CD8-positive, alpha-beta memory T cell (primary cell): ENCODE measurements at regions of chr11 and their contacts with region 1.

Region 1: GRCh38 chr11:61041755-61042518 is 60.4 kb upstream of the CD5 start:
- DNase-seq: peak; percentile 54 to 92 (median 83)
- H3K4me3 ChIP-seq: peak overlapping the region; percentile 20
- H3K4me3 Mint-ChIP-seq: peak overlapping the region; percentile 74 to 90 (median 83)
- H3K27ac ChIP-seq: peak overlapping the region; percentile 83
- H3K27ac Mint-ChIP-seq: peak overlapping the region; percentile 95 to 100 (median 97)
- H3K4me1 ChIP-seq: peaks cover 50% of the 10 kb centered on the region
- H3K4me1 Mint-ChIP-seq: peaks cover 25 to 49% (median 37%) of the 10 kb centered on the region in 3 donors
- H3K27me3 ChIP-seq: no peaks in the 10 kb centered on the region
- H3K27me3 Mint-ChIP-seq: no peaks in the 10 kb centered on the region

Region 2: GRCh38 chr11:60985991-60986915 is 55.7 kb before region 1 on chr11:
- CTCF ChIA-PET with region 1: interaction called, 8 read pairs
- POLR2A ChIA-PET with region 1: interaction called, 10 read pairs
- DNase-seq: peak; percentile 81 to 97 (median 95)
- H3K4me3 ChIP-seq: peak overlapping the region; percentile 23
- H3K4me3 Mint-ChIP-seq: peak overlapping the region; percentile 56 to 82 (median 71)
- H3K27ac ChIP-seq: peak overlapping the region; percentile 55
- H3K27ac Mint-ChIP-seq: peak overlapping the region; percentile 84 to 99 (median 96)
- H3K4me1 ChIP-seq: peaks cover 88% of the 10 kb centered on the region
- H3K4me1 Mint-ChIP-seq: peaks cover 79 to 97% (median 92%) of the 10 kb centered on the region in 3 donors
- H3K27me3 ChIP-seq: no peaks in the 10 kb centered on the region
- H3K27me3 Mint-ChIP-seq: no peaks in the 10 kb centered on the region

Region 3: DNA sequence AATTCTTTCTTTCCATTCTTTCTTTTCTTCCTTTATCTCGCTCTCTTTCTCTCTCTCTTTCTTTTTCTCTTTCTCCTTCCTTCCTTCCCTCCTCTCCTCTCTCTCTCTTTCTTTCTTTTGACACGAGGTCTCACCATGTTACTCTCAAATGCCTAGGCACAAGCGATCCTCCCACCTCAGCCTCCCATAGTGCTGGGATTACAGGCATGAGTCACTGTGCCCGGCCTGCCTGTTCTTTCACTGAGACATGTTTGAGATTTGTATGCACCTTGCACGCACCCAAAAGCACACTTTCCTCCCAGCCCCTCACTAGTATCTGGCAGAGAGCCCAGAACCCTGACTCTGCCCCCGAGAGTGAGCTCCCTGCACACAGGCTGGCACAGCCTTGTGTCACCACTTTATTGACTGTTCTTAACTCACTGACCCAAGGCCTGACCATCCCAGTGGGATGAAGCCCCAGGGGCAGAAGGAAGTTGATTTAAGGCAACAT is 13.6 kb before region 1 on chr11:
- CTCF ChIA-PET with region 1: interaction called, 27 read pairs
- POLR2A ChIA-PET with region 1: interaction called, 38 read pairs
- DNase-seq: peak in 3 of 5 donors; percentile 23 to 70 (median 56)
- H3K4me3 ChIP-seq: peak overlapping the region; percentile 40
- H3K4me3 Mint-ChIP-seq: peak overlapping the region; percentile 62 to 84 (median 77)
- H3K27ac ChIP-seq: no peak overlapping the region
- H3K27ac Mint-ChIP-seq: peak overlapping the region in 7 of 8 donors; percentile 61 to 96 (median 95)
- H3K4me1 ChIP-seq: peaks cover 57% of the 10 kb centered on the region
- H3K4me1 Mint-ChIP-seq: peaks cover 47 to 69% (median 60%) of the 10 kb centered on the region in 3 donors
- H3K27me3 ChIP-seq: no peaks in the 10 kb centered on the region
- H3K27me3 Mint-ChIP-seq: peaks cover 0 to 4% of the 10 kb centered on the region in 2 donors

Region 4: GRCh38 chr11:61061081-61061826 is 19.3 kb after region 1 on chr11:
- CTCF ChIA-PET with region 1: interaction called, 6 read pairs
- POLR2A ChIA-PET with region 1: interaction called, 17 read pairs
- DNase-seq: peak; percentile 40 to 83 (median 63)
- H3K4me3 ChIP-seq: peak overlapping the region; percentile 27
- H3K4me3 Mint-ChIP-seq: peak overlapping the region; percentile 58 to 89 (median 84)
- H3K27ac ChIP-seq: peak overlapping the region; percentile 40
- H3K27ac Mint-ChIP-seq: peak overlapping the region; percentile 79 to 98 (median 93)
- H3K4me1 ChIP-seq: peaks cover 49% of the 10 kb centered on the region
- H3K4me1 Mint-ChIP-seq: peaks cover 38 to 67% (median 57%) of the 10 kb centered on the region in 3 donors
- H3K27me3 ChIP-seq: no peaks in the 10 kb centered on the region
- H3K27me3 Mint-ChIP-seq: no peaks in the 10 kb centered on the region

Region 5: GRCh38 chr11:61083601-61084147 is 41.7 kb after region 1 on chr11:
- CTCF ChIA-PET with region 1: interaction called, 24 read pairs
- POLR2A ChIA-PET with region 1: interaction called, 26 read pairs
- DNase-seq: peak; percentile 51 to 87 (median 67)
- H3K4me3 ChIP-seq: peak overlapping the region; percentile 57
- H3K4me3 Mint-ChIP-seq: peak overlapping the region; percentile 26 to 87 (median 75)
- H3K27ac ChIP-seq: peak overlapping the region; percentile 66
- H3K27ac Mint-ChIP-seq: peak overlapping the region; percentile 94 to 99 (median 96)
- H3K4me1 ChIP-seq: peaks cover 50% of the 10 kb centered on the region
- H3K4me1 Mint-ChIP-seq: peaks cover 38 to 58% (median 52%) of the 10 kb centered on the region in 3 donors
- H3K27me3 ChIP-seq: no peaks in the 10 kb centered on the region
- H3K27me3 Mint-ChIP-seq: peaks cover 0 to 1% of the 10 kb centered on the region in 2 donors